ENCODE measurements at regions of chr15 and their contacts with region 1.

Region 1: GRCh38 chr15:101014921-101015841 is 96.0 kb downstream of the LRRK1 start:
- DNase-seq: peak; percentile 79 to 80
- ATAC-seq: peak; percentile 68 to 80 (median 78)
- H3K4me3 ChIP-seq: no peak overlapping the region
- H3K27ac ChIP-seq: no peak overlapping the region
- H3K4me1 ChIP-seq: peaks cover 0 to 27% (median 4%) of the 10 kb centered on the region in 9 donors
- H3K27me3 ChIP-seq: no peaks in the 10 kb centered on the region
- CTCF ChIP-seq: peak; percentile 81 to 93 (median 89)

Region 2: GRCh38 chr15:100849252-100850171 is 165.7 kb before region 1 on chr15:
- intact Hi-C with region 1: no loop called
- DNase-seq: peak; percentile 24 to 34
- ATAC-seq: peak; percentile 55 to 83 (median 74)
- H3K4me3 ChIP-seq: peak overlapping the region; percentile 14 to 57 (median 50)
- H3K27ac ChIP-seq: peak overlapping the region in 2 of 10 donors; percentile 15 to 38
- H3K4me1 ChIP-seq: peaks cover 0 to 13% (median 7%) of the 10 kb centered on the region in 9 donors
- H3K27me3 ChIP-seq: peaks cover 0 to 35% (median 32%) of the 10 kb centered on the region in 7 donors
- CTCF ChIP-seq: peak in 4 of 9 donors; percentile 9 to 41 (median 24)

Region 3: GRCh38 chr15:101045236-101045646 is 30.1 kb after region 1 on chr15:
- intact Hi-C with region 1: no loop called
- DNase-seq: peak in 1 of 2 donors; percentile 53
- ATAC-seq: peak in 7 of 8 donors; percentile 54 to 78 (median 61)
- H3K4me3 ChIP-seq: no peak overlapping the region
- H3K27ac ChIP-seq: peak overlapping the region in 7 of 10 donors; percentile 31 to 80 (median 57)
- H3K4me1 ChIP-seq: peaks cover 0 to 34% (median 13%) of the 10 kb centered on the region in 9 donors
- H3K27me3 ChIP-seq: no peaks in the 10 kb centered on the region
- CTCF ChIP-seq: no peak

Region 4: DNA sequence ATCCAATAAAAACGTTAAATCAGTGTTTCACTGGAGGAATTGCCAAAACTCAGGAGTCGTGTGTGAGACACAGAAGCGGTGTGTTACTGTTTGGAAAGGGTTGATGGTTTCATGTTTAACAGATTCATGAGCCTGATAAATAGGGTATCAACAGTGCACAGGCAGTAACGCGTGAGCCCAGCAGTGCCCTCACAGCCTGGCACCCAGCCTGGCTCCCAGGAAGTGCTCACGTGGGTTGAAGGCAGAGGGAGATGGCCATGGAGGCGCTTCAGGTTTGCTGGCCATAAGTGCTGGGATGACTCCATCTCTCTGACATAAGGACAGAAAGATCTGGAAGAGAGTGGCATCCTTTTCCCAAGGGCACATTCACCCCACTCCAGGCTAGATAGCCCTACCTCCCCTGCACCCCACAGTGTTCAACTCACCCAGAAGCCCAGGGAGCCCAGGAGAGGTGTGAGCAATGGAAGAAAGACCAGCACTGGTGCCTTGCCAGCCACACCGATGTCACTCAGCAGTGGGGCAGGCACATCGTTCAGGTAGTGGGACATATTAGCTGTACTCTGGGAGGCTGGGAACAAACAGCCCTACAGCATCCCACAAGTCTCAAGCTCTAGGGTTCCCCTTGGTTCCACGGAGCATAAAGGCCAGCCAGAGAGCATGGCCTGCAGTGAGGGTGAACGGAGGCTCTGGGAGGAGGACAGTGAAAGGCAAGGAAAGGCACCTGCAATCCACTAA is 68.3 kb after region 1 on chr15:
- intact Hi-C with region 1: loop called in 9 of 10 experiments (anchors 2 to 10 kb)
- DNase-seq: no peak
- ATAC-seq: no peak
- H3K4me3 ChIP-seq: no peak overlapping the region
- H3K27ac ChIP-seq: no peak overlapping the region
- H3K4me1 ChIP-seq: peaks cover 0 to 6% (median 3%) of the 10 kb centered on the region in 9 donors
- H3K27me3 ChIP-seq: no peaks in the 10 kb centered on the region
- CTCF ChIP-seq: no peak

Region 5: GRCh38 chr15:101148166-101148880 is 133.1 kb after region 1 on chr15:
- intact Hi-C with region 1: no loop called
- DNase-seq: no peak
- ATAC-seq: peak in 6 of 8 donors; percentile 21 to 75 (median 38)
- H3K4me3 ChIP-seq: no peak overlapping the region
- H3K27ac ChIP-seq: peak overlapping the region in 7 of 10 donors; percentile 32 to 64 (median 45)
- H3K4me1 ChIP-seq: peaks cover 10 to 32% (median 19%) of the 10 kb centered on the region in 9 donors
- H3K27me3 ChIP-seq: no peaks in the 10 kb centered on the region
- CTCF ChIP-seq: no peak

Region 6: GRCh38 chr15:101258238-101259144 is 243.3 kb after region 1 on chr15:
- intact Hi-C with region 1: loop called (anchors 1 to 2 kb)
- DNase-seq: peak in 1 of 2 donors; percentile 75
- ATAC-seq: peak in 7 of 8 donors; percentile 43 to 78 (median 67)
- H3K4me3 ChIP-seq: no peak overlapping the region
- H3K27ac ChIP-seq: no peak overlapping the region
- H3K4me1 ChIP-seq: peaks cover 0 to 26% (median 21%) of the 10 kb centered on the region in 9 donors
- H3K27me3 ChIP-seq: no peaks in the 10 kb centered on the region
- CTCF ChIP-seq: peak; percentile 71 to 97 (median 90)

Measured in heart right ventricle (tissue), 16 donors.